PC-3 (cell line): ENCODE measurements at regions of chr19 and their contacts with region 1.

Region 1: GRCh38 chr19:39212375-39212742 is 8.3 kb upstream of the SYCN start:
- DNase-seq: peak; percentile 32
- ATAC-seq: no peak; the same call in 1 of the 2 replicates
- H3K4me3 ChIP-seq: no peak overlapping the region
- H3K27ac ChIP-seq: no peak overlapping the region
- H3K4me1 ChIP-seq: no peaks in the 10 kb centered on the region
- H3K27me3 ChIP-seq: no peaks in the 10 kb centered on the region
- CTCF ChIP-seq: peak; percentile 61

Region 2: DNA sequence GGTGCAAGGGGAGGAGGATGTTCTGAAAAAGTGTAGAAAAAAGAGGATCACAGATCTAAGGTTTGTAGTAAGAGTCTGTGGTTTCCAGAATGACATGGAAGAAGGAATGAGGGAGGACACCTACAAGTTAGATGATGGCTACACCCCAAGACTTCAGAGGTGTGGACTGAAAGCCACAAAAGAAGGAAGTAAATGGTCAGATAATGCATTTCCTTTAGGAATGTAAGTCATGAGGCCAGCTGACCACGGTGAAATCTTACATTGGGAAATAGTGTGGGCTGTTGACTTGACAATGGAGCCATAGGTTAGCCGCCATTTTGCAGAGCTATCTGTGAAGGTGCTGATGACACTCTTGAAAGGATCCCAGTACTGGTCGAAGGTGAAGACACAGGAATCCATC is 154.7 kb before region 1 on chr19:
- CTCF ChIA-PET with region 1: no interaction called
- POLR2A ChIA-PET with region 1: no interaction called
- intact Hi-C with region 1: no loop called
- DNase-seq: no peak
- ATAC-seq: no peak
- H3K4me3 ChIP-seq: no peak overlapping the region
- H3K27ac ChIP-seq: no peak overlapping the region
- H3K4me1 ChIP-seq: no peaks in the 10 kb centered on the region
- H3K27me3 ChIP-seq: no peaks in the 10 kb centered on the region
- CTCF ChIP-seq: no peak

Region 3: GRCh38 chr19:39277612-39278011 is 65.3 kb after region 1 on chr19:
- CTCF ChIA-PET with region 1: no interaction called
- POLR2A ChIA-PET with region 1: no interaction called
- intact Hi-C with region 1: no loop called
- DNase-seq: no peak
- ATAC-seq: no peak
- H3K4me3 ChIP-seq: no peak overlapping the region
- H3K27ac ChIP-seq: no peak overlapping the region
- H3K4me1 ChIP-seq: no peaks in the 10 kb centered on the region
- H3K27me3 ChIP-seq: no peaks in the 10 kb centered on the region
- CTCF ChIP-seq: no peak

Region 4: DNA sequence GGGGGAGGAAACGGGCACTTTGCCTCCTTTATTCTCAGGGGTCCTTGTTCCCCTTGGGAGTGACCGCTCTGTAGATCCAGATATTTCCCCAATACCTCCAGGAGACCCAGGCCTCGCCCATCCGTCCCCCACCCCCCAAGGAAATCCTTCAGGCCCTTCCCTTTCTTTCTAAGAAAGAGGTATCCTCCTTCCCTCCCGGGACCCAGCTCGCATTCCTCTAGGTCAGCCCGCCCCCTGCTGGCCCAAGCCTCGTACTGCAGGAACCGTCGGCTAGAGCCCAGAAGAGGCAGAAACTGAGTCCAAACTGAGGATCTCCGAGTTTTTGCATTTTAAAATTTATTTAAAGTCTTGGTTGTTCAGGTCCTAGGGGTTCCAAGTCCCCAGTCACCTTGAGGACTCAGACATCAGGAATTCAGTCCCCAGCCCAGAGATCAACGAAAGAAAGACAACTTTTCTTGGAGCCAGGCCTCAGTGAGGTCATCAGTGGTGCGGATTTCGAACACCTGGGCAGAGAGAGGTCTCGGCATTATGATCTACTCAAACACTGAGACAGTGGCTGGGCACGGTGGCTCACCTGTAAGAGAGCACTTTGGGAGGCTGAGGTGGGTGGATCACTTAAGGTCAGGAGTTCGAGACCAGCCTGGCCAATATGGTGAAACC is 115.8 kb after region 1 on chr19:
- CTCF ChIA-PET with region 1: no interaction called
- POLR2A ChIA-PET with region 1: no interaction called
- intact Hi-C with region 1: loop called (anchors 5 kb)
- DNase-seq: peak; percentile 79
- ATAC-seq: peak; percentile 65
- H3K4me3 ChIP-seq: no peak overlapping the region
- H3K27ac ChIP-seq: no peak overlapping the region
- H3K4me1 ChIP-seq: no peaks in the 10 kb centered on the region
- H3K27me3 ChIP-seq: no peaks in the 10 kb centered on the region
- CTCF ChIP-seq: peak; percentile 90